ENCODE measurements at regions of chr20 and their contacts with region 1.

Region 1: GRCh38 chr20:36460648-36461599 is 80.4 kb upstream of the MYL9 start:
- DNase-seq: peak; percentile 89
- H3K4me3 Mint-ChIP-seq: peak overlapping the region; percentile 74
- H3K27ac Mint-ChIP-seq: peak overlapping the region; percentile 52
- H3K4me1 Mint-ChIP-seq: peaks cover 47% of the 10 kb centered on the region
- H3K27me3 Mint-ChIP-seq: no peaks in the 10 kb centered on the region

Region 2: GRCh38 chr20:36472637-36473081 is 11.7 kb after region 1 on chr20:
- CTCF ChIA-PET with region 1: interaction called, 7 read pairs
- intact Hi-C with region 1: loop called (anchors 1 kb)
- DNase-seq: peak; percentile 51
- H3K4me3 Mint-ChIP-seq: peak overlapping the region; percentile 38
- H3K27ac Mint-ChIP-seq: peak overlapping the region; percentile 46
- H3K4me1 Mint-ChIP-seq: peaks cover 34% of the 10 kb centered on the region
- H3K27me3 Mint-ChIP-seq: no peaks in the 10 kb centered on the region

Region 3: GRCh38 chr20:36573103-36573794 is 112.3 kb after region 1 on chr20 and contains the start of gene TGIF2:
- CTCF ChIA-PET with region 1: no interaction called
- intact Hi-C with region 1: loop called (anchors 2 kb)
- DNase-seq: peak; percentile 90
- H3K4me3 Mint-ChIP-seq: peak within 1 kb of the TSS; percentile 91
- H3K27ac Mint-ChIP-seq: peak within 1 kb of the TSS; percentile 93
- H3K4me1 Mint-ChIP-seq: peaks cover 35% of the 10 kb centered on the region
- H3K27me3 Mint-ChIP-seq: no peaks in the 10 kb centered on the region
- total RNA-seq, gene TGIF2: 32.2 to 33.6 TPM

Region 4: DNA sequence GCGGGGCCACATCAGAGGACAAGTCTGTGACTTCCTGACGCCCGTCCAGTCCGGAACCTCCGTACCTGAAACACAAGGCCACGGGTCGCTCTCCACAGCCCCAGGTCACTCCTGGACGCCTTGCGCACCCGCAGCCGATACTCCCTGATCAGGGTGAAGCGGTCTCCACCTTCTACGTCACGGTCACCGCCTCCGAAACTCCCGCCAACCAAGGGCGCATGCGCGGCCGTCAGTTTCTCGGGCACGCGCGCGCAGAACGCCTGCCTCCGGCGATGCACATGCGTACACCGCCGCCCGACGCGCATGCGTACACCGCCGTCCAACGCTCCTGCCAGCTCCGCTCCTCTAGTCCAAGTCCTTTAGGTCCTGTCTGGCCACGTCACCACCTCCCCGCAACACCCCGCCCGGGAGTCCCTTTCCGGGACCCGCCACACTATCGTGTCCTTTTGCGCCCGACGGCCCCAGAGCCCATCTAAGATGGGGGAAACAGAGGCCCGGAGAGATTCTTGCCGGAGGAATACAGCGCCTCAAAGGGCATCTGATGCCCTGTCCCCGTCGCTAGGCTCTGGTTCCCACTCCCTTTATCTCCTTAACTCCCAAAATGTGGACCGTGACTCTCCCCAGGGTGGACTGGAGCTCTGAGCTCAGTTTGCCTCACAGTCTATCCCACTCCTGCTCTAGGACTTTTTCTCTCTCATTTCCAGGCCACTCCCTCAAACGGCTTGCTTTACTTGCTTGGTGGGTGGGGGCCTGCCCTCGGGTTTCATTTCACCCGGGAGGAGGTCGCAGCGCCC is 312.9 kb after region 1 on chr20 and contains the start of gene DSN1:
- CTCF ChIA-PET with region 1: no interaction called
- intact Hi-C with region 1: loop called (anchors 5 kb)
- DNase-seq: peak; percentile 98
- H3K4me3 Mint-ChIP-seq: peak within 1 kb of the TSS; percentile 97
- H3K27ac Mint-ChIP-seq: peak within 1 kb of the TSS; percentile 97
- H3K4me1 Mint-ChIP-seq: peaks cover 21% of the 10 kb centered on the region
- H3K27me3 Mint-ChIP-seq: no peaks in the 10 kb centered on the region
- total RNA-seq, gene DSN1: 23.0 to 24.7 TPM